Adrenal gland (tissue), 19 donors: ENCODE measurements at regions of chr11 and their contacts with region 1.

Region 1: DNA sequence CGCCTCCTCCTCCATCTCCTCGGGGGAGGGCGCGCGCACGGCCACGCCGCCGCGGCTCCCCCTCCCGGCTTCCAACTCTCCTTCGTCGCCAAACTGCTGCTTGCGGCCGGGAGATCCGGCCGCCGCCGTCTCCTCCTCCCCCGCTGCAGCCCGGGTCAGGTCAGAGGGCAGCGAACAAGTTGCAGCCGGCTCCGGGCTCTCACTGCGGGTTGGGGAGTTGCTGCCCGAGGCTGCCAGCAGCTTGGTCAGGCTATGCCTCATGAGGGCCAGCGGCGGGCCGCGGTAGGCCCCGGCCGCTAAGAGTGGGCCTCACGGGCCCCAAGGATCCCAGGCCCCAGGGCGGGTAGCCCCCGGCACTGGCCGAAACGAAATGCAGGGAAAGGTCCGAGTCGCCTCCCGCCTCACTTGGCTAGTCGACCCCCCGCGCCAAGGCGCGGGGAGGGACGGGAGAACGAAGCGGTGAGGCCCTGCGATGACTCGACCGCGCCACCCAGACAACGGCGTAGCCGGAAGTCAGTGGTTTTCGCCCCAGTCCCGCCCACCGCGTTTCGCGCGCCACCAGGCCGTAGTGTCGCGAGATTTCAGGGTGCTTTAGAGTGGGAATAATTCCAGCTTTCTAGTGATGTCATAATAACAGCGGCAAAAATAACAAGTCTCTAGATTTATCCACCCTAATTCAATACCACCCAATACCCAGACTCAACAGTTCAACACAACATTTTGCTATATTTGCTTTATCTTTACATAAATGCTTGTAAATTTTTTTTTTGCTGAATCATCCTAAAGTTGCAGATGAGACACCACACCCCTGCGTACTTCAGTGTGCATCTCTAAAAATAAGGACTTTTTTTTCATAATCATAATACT is at the start of gene CREBZF:
- DNase-seq: peak; percentile 94 to 97 (median 95)
- H3K4me3 ChIP-seq: peak within 1 kb of the TSS; percentile 83 to 96 (median 94)
- H3K27ac ChIP-seq: peak within 1 kb of the TSS; percentile 98 to 99 (median 98)
- H3K4me1 ChIP-seq: peaks cover 30 to 43% of the 10 kb centered on the region in 2 donors
- H3K27me3 ChIP-seq: no peaks in the 10 kb centered on the region
- CTCF ChIP-seq: no peak
- POLR2A ChIP-seq: peak; percentile 97 to 98
- total RNA-seq, gene CREBZF: 18.2 to 78.6 (median 40.5) TPM

Region 2: GRCh38 chr11:84886344-84886743 is 778.5 kb before region 1 on chr11:
- intact Hi-C with region 1: no loop called
- DNase-seq: no peak
- H3K4me3 ChIP-seq: no peak overlapping the region
- H3K27ac ChIP-seq: no peak overlapping the region
- H3K4me1 ChIP-seq: no peaks in the 10 kb centered on the region
- H3K27me3 ChIP-seq: no peaks in the 10 kb centered on the region
- CTCF ChIP-seq: no peak
- POLR2A ChIP-seq: no peak

Region 3: DNA sequence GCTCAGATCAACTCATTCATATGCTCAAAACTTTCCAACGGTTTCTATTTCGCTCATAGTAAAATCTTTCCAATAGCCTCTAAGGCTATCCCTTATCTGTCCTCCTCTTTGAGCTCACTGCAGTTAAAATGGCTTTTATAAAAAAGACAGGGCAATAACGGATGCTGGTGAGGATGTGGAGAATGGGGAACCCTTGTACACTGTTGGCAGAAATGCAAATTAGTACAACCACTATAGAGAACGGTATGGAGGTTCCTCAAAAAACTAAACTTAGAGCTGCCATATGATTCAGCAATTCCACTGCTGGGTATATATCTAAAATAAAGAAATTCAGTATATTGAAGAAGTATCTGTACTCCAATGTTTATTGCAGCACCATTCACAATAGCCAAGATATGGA is 383.3 kb before region 1 on chr11:
- intact Hi-C with region 1: no loop called
- DNase-seq: no peak
- H3K4me3 ChIP-seq: no peak overlapping the region
- H3K27ac ChIP-seq: no peak overlapping the region
- H3K4me1 ChIP-seq: no peaks in the 10 kb centered on the region
- H3K27me3 ChIP-seq: no peaks in the 10 kb centered on the region
- CTCF ChIP-seq: no peak
- POLR2A ChIP-seq: no peak

Region 4: DNA sequence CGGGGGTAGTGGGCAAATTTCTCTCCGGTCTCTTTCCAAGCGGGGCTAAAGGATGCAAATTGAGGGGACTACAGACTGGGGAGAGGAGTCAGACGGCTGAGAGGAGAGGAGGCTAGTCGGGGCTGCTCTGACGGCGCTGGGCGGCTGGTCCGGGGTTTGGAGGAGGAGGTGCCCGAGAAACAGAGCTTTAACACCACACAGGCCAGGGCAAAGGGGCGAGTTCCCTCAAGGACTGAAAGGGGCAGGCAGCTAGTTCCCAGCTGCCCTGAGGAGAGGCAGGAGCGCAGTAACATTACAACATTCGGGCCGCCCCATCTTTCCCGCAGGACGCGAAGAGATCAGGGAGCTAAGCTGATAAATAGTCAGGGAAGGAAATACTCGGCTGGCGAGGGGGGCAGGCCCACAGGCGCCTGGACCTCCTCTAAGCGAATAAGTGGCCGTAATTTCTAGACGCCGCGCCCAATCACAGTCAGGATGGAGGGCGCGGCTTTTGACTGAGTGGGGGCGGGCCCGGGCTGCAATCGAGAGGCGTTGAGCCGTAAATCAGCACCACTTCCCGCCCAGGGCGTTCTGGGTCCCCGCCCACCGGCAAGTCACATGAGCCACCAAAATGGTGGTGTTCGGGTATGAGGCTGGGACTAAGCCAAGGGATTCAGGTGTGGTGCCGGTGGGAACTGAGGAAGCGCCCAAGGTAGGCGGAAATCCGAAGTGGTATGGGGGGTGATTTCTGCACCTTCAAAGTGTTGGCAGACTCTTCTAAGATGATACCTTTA is 36.7 kb before region 1 on chr11 and contains the start of gene TMEM126B:
- intact Hi-C with region 1: loop called in 1 of 2 experiments (anchors 5 kb)
- DNase-seq: peak; percentile 97 to 99 (median 98)
- H3K4me3 ChIP-seq: peak within 1 kb of the TSS in 3 of 4 donors; percentile 57 to 79 (median 79)
- H3K27ac ChIP-seq: peak within 1 kb of the TSS; percentile 74 to 95 (median 80)
- H3K4me1 ChIP-seq: peaks cover 10 to 35% of the 10 kb centered on the region in 2 donors
- H3K27me3 ChIP-seq: no peaks in the 10 kb centered on the region
- CTCF ChIP-seq: no peak
- POLR2A ChIP-seq: peak; percentile 77 to 92
- total RNA-seq, gene TMEM126B: 39.9 to 96.4 (median 50.4) TPM

Region 5: DNA sequence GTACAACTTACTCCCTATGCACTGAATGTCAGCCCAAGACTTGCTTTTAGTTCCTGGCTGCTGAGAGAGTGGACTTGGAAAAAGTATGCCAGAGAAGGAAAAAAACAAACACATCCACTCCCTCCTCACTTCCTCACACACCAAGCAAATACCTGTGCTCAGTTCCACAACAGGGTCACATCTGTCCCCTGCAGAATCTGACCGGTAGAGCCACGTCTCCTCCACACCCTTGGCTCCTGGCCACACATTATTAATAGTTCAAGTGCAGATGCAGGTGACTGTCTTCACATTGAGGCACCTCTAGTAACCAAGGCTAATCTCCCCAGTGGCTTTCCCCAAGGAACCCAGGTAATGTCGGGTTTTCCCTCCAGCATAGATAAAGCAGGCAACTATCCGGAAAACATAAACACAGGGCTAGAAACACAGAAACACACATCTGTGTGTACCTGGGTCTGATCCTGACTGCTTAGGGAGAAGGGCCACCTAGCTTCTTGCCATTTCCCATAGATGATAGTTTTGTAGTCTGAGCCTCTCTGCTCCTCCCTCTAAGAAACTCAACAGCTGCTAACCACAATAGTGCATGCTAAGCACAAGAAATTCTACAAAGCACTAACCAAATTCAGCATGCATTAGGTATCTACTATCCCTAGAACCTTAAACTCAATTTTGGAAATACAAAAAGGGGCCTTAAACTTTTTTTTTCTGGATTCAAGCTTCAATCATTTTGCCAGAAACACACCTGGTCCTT is 135.9 kb after region 1 on chr11:
- intact Hi-C with region 1: no loop called
- DNase-seq: no peak
- H3K4me3 ChIP-seq: no peak overlapping the region
- H3K27ac ChIP-seq: no peak overlapping the region
- H3K4me1 ChIP-seq: no peaks in the 10 kb centered on the region
- H3K27me3 ChIP-seq: no peaks in the 10 kb centered on the region
- CTCF ChIP-seq: no peak
- POLR2A ChIP-seq: no peak